SK-N-SH (cell line): ENCODE measurements at regions of chr6 and their contacts with region 1.

Region 1: DNA sequence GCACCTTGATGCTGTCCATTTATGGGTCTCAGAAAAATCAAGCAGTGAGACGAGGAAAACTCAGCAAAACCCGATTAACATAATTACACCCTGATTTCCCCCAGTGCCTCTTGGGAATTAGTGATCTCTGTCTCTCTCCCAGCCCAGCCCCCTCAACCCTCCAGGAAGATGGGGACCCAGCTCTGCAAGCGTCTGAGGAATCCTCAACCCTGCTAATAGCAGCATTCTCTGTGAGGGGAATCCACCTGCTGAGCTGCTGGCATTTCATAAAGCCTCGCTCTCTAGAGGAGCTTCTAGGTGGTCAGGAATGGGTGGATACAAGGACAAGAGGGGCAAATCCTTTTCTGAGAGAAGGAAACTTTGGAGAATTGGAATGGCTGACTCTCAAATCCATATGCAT is 13.9 kb downstream of the NR2E1 start:
- DNase-seq: no peak
- H3K4me3 ChIP-seq: no peak overlapping the region
- H3K27ac ChIP-seq: no peak overlapping the region
- H3K4me1 ChIP-seq: no peaks in the 10 kb centered on the region
- H3K27me3 ChIP-seq: peaks cover 4% of the 10 kb centered on the region
- CTCF ChIP-seq: no peak
- EP300 ChIP-seq: no peak
- RAD21 ChIP-seq: no peak

Region 2: GRCh38 chr6:108168501-108169463 is 11.0 kb before region 1 on chr6:
- CTCF ChIA-PET with region 1: interaction called, 11 read pairs
- POLR2A ChIA-PET with region 1: no interaction called
- DNase-seq: peak; percentile 74
- H3K4me3 ChIP-seq: no peak overlapping the region
- H3K27ac ChIP-seq: no peak overlapping the region
- H3K4me1 ChIP-seq: peaks cover 0 to 19% of the 10 kb centered on the region in 2 experiments; a peak in 1 of 4 replicates
- H3K27me3 ChIP-seq: peaks cover 34% of the 10 kb centered on the region
- CTCF ChIP-seq: no peak
- EP300 ChIP-seq: no peak
- RAD21 ChIP-seq: no peak

Region 3: DNA sequence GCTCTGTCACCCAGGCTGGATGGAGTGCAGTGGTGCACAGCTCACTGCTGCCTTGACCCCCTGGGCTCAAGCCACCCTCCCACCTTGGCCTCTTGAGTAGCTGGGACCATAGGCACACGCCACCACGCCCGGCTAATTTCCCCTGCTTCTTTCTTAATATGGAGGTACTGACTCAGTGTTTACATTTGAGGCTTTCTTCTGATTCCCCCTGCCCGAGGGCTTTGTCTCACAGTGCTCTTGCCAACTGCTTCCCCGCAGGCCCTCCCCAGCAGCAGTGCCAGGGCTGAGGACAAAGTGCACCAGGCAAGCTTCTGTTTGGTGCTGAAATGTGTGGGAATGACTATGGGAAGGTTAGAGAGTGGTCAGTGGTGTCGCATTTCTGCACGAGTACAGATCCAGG is 20.9 kb after region 1 on chr6:
- CTCF ChIA-PET with region 1: no interaction called
- POLR2A ChIA-PET with region 1: no interaction called
- DNase-seq: no peak
- H3K4me3 ChIP-seq: no peak overlapping the region
- H3K27ac ChIP-seq: no peak overlapping the region
- H3K4me1 ChIP-seq: no peaks in the 10 kb centered on the region
- H3K27me3 ChIP-seq: no peaks in the 10 kb centered on the region
- CTCF ChIP-seq: no peak
- EP300 ChIP-seq: no peak
- RAD21 ChIP-seq: no peak